GM12878 (cell line): ENCODE measurements at regions of chr13 and their contacts with region 1.

Region 1: DNA sequence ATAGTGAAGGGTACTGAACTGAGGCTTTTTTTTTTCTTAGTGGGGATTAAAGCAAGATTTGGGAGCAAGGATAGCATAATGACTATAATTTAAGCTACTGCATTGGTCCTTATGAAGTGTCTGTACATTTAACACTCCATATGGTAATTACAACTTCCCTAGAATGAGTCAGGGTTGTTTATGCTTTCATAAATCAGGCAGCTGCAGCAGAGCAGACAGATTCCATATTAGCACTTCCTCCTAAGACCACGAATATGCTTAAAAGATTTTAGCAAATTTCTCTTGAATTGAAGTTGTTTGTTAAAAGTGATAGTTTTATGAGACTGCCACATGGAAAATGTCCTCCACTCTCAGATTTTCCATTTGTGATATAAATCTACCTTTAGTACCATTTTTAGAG is 401.1 kb upstream of the SPRY2 start:
- DNase-seq: no peak
- ATAC-seq: peak; percentile 62
- H3K4me3 ChIP-seq: no peak overlapping the region
- H3K27ac ChIP-seq: no peak overlapping the region
- H3K4me1 ChIP-seq: no peaks in the 10 kb centered on the region
- H3K27me3 ChIP-seq: no peaks in the 10 kb centered on the region
- CTCF ChIP-seq: no peak
- EP300 ChIP-seq: no peak
- POLR2A ChIP-seq: no peak
- RAD21 ChIP-seq: no peak

Region 2: DNA sequence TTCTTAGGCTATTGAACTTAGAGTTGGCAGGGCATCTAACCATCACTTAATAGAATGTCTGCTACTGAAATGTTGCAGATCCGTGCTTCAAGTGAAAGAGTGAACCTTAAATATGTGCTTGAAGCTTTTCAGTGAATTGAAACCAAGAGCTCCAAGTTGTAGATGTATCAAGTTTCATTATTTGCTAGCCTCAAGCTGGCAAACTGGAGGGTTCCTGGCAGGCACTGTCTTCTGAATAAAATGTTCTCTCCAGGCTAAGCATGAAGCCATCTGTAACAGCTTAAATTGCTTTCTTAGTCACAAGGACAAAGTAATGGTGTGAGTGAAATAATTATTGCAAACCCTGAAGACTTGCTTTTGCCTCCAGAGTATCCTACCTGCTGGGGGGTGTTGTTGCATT is 13.9 kb after region 1 on chr13:
- CTCF ChIA-PET with region 1: interaction called, 4 read pairs
- POLR2A ChIA-PET with region 1: no interaction called
- RAD21 ChIA-PET with region 1: no interaction called
- SMC1A ChIA-PET with region 1: interaction called, 12 read pairs
- in situ Hi-C with region 1: no loop called
- intact Hi-C with region 1: no loop called
- DNase-seq: no peak
- ATAC-seq: no peak
- H3K4me3 ChIP-seq: no peak overlapping the region
- H3K27ac ChIP-seq: no peak overlapping the region
- H3K4me1 ChIP-seq: no peaks in the 10 kb centered on the region
- H3K27me3 ChIP-seq: no peaks in the 10 kb centered on the region
- CTCF ChIP-seq: no peak
- EP300 ChIP-seq: no peak
- POLR2A ChIP-seq: no peak
- RAD21 ChIP-seq: no peak

Region 3: GRCh38 chr13:81395368-81395767 is 653.3 kb after region 1 on chr13:
- CTCF ChIA-PET with region 1: no interaction called
- POLR2A ChIA-PET with region 1: no interaction called
- RAD21 ChIA-PET with region 1: no interaction called
- SMC1A ChIA-PET with region 1: no interaction called
- in situ Hi-C with region 1: no loop called
- intact Hi-C with region 1: no loop called
- DNase-seq: no peak
- ATAC-seq: peak; percentile 69
- H3K4me3 ChIP-seq: no peak overlapping the region
- H3K27ac ChIP-seq: no peak overlapping the region
- H3K4me1 ChIP-seq: no peaks in the 10 kb centered on the region
- H3K27me3 ChIP-seq: no peaks in the 10 kb centered on the region
- CTCF ChIP-seq: no peak
- EP300 ChIP-seq: no peak
- POLR2A ChIP-seq: no peak
- RAD21 ChIP-seq: no peak